ENCODE measurements at regions of chr5 and their contacts with region 1.

Region 1: GRCh38 chr5:59587489-59588337 is 305.8 kb downstream of the PDE4D start:
- DNase-seq: peak; percentile 15
- ATAC-seq: no peak
- H3K4me3 Mint-ChIP-seq: no peak overlapping the region
- H3K27ac Mint-ChIP-seq: no peak overlapping the region
- H3K4me1 Mint-ChIP-seq: peaks cover 9% of the 10 kb centered on the region
- H3K27me3 Mint-ChIP-seq: peaks cover 21% of the 10 kb centered on the region

Region 2: DNA sequence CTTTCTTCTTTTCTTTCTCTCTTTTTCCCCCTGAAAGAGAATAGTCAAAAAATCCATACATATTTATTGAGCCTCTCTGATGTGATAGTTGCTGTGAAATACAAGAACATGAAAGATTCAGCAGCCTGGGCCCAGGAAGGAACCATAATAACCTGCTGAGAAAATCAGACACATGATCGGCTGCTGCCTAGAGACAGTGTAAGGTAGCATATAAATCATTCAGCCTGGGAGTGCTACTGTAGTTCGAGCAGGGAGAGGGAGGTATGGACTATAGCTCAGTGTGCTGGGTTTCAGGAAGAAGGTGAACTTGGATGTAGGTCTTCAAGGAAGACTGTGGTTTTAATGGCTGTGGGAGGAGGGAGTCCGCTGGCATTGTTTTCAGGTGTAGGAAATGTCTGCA is 535.8 kb before region 1 on chr5:
- CTCF ChIA-PET with region 1: no interaction called
- POLR2A ChIA-PET with region 1: no interaction called
- intact Hi-C with region 1: no loop called
- DNase-seq: no peak
- ATAC-seq: no peak
- H3K4me3 Mint-ChIP-seq: no peak overlapping the region
- H3K27ac Mint-ChIP-seq: no peak overlapping the region
- H3K4me1 Mint-ChIP-seq: no peaks in the 10 kb centered on the region
- H3K27me3 Mint-ChIP-seq: no peaks in the 10 kb centered on the region

Region 3: GRCh38 chr5:59548807-59549357 is 38.8 kb before region 1 on chr5:
- CTCF ChIA-PET with region 1: no interaction called
- POLR2A ChIA-PET with region 1: no interaction called
- intact Hi-C with region 1: no loop called
- DNase-seq: no peak
- ATAC-seq: no peak
- H3K4me3 Mint-ChIP-seq: no peak overlapping the region
- H3K27ac Mint-ChIP-seq: no peak overlapping the region
- H3K4me1 Mint-ChIP-seq: no peaks in the 10 kb centered on the region
- H3K27me3 Mint-ChIP-seq: no peaks in the 10 kb centered on the region

Region 4: GRCh38 chr5:59608745-59609144 is 21.0 kb after region 1 on chr5:
- CTCF ChIA-PET with region 1: no interaction called
- POLR2A ChIA-PET with region 1: no interaction called
- intact Hi-C with region 1: loop called (anchors 1 to 2 kb)
- DNase-seq: peak; percentile 28
- ATAC-seq: peak; percentile 58
- H3K4me3 Mint-ChIP-seq: no peak overlapping the region
- H3K27ac Mint-ChIP-seq: no peak overlapping the region
- H3K4me1 Mint-ChIP-seq: peaks cover 18% of the 10 kb centered on the region
- H3K27me3 Mint-ChIP-seq: peaks cover 22% of the 10 kb centered on the region

Region 5: GRCh38 chr5:59799668-59800346 is 212.1 kb after region 1 on chr5:
- CTCF ChIA-PET with region 1: no interaction called
- POLR2A ChIA-PET with region 1: no interaction called
- intact Hi-C with region 1: no loop called
- DNase-seq: peak; percentile 23
- ATAC-seq: peak; percentile 74
- H3K4me3 Mint-ChIP-seq: no peak overlapping the region
- H3K27ac Mint-ChIP-seq: no peak overlapping the region
- H3K4me1 Mint-ChIP-seq: no peaks in the 10 kb centered on the region
- H3K27me3 Mint-ChIP-seq: no peaks in the 10 kb centered on the region

Measured in activated CD4-positive, alpha-beta T cell treated with anti-CD3 and anti-CD28 coated beads for 36 hours (primary cell).